Naive thymus-derived CD4-positive, alpha-beta T cell (primary cell): ENCODE measurements at regions of chr11 and their contacts with region 1.

Region 1: GRCh38 chr11:77820563-77821348 is at the starts of genes AAMDC and RSF1:
- DNase-seq: peak; percentile 89 to 98 (median 97)
- ATAC-seq: peak; percentile 92
- H3K4me3 ChIP-seq: peak within 1 kb of the TSS; percentile 97
- H3K4me3 Mint-ChIP-seq: peak within 1 kb of the TSS; percentile 89 to 100 (median 98)
- H3K27ac ChIP-seq: peak within 1 kb of the TSS; percentile 84
- H3K27ac Mint-ChIP-seq: peak within 1 kb of the TSS; percentile 93 to 99 (median 95)
- H3K4me1 ChIP-seq: peaks cover 28 to 30% of the 10 kb centered on the region in 2 donors
- H3K4me1 Mint-ChIP-seq: peaks cover 27 to 48% (median 42%) of the 10 kb centered on the region in 7 donors
- H3K27me3 ChIP-seq: no peaks in the 10 kb centered on the region
- H3K27me3 Mint-ChIP-seq: peaks cover 0 to 2% (median 0%) of the 10 kb centered on the region in 5 donors
- total RNA-seq, gene AAMDC: 5.2 to 9.2 (median 6.5) TPM
- total RNA-seq, gene RSF1: 59.0 to 113 (median 88.9) TPM

Region 2: DNA sequence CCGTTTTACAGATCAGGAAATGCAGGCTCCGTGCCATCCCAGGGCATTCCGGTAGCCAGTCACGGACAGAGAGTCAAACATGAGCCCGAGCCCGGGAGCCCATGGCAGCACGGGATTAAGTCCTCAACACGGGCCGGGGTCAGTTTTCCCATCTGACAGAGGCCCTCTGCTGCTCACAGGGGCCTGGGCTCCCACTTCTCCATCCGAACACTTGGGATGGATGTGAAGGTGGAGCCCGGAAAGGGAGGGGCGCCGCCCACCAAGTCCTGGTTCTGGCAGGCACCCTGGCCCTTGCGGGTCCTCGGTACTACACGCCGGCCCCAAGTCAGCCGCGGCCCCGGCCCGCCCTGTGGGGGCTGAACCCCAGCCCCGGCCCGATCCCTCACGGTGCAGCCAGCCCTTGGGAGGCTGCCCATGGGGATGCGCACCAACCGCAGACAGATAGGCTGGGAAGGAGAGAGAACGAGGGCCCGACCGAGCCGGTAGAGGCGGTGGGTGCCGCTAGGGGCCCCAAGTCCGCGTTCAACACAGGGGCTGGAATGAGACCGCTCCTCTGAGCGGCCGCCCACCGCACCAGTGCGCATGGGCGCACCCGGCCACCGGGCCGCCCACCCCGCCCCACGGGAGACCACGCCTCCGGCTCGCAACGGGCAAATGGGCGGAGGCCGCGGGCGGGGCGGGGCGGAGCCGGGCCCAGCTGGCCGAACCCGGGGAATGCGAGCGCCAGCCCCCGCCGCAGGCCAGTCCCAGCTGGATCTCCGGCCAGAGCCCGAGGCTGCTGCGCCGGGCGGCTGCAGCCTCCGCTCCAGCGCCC is 754.3 kb before region 1 on chr11 and contains the start of gene CAPN5:
- CTCF ChIA-PET with region 1: no interaction called
- POLR2A ChIA-PET with region 1: no interaction called
- intact Hi-C with region 1: loop called (anchors 2 kb)
- DNase-seq: peak; percentile 72 to 93 (median 85)
- ATAC-seq: peak; percentile 98
- H3K4me3 ChIP-seq: peak within 1 kb of the TSS; percentile 73
- H3K4me3 Mint-ChIP-seq: peak within 1 kb of the TSS; percentile 81 to 95 (median 87)
- H3K27ac ChIP-seq: peak within 1 kb of the TSS; percentile 73
- H3K27ac Mint-ChIP-seq: peak within 1 kb of the TSS in 8 of 9 donors; percentile 49 to 95 (median 82)
- H3K4me1 ChIP-seq: peaks cover 0 to 9% of the 10 kb centered on the region in 2 donors
- H3K4me1 Mint-ChIP-seq: peaks cover 5 to 28% (median 21%) of the 10 kb centered on the region in 7 donors
- H3K27me3 ChIP-seq: no peaks in the 10 kb centered on the region
- H3K27me3 Mint-ChIP-seq: peaks cover 0 to 32% (median 0%) of the 10 kb centered on the region in 5 donors
- total RNA-seq, gene CAPN5: 0.94 to 5.8 (median 5.6) TPM

Region 3: GRCh38 chr11:77175869-77176539 is 644.8 kb before region 1 on chr11:
- CTCF ChIA-PET with region 1: no interaction called
- POLR2A ChIA-PET with region 1: no interaction called
- intact Hi-C with region 1: no loop called
- DNase-seq: no peak
- ATAC-seq: peak; percentile 78
- H3K4me3 ChIP-seq: no peak overlapping the region
- H3K4me3 Mint-ChIP-seq: no peak overlapping the region
- H3K27ac ChIP-seq: no peak overlapping the region
- H3K27ac Mint-ChIP-seq: no peak overlapping the region
- H3K4me1 ChIP-seq: no peaks in the 10 kb centered on the region
- H3K4me1 Mint-ChIP-seq: peaks cover 0 to 9% (median 0%) of the 10 kb centered on the region in 7 donors
- H3K27me3 ChIP-seq: no peaks in the 10 kb centered on the region
- H3K27me3 Mint-ChIP-seq: peaks cover 0 to 1% (median 0%) of the 10 kb centered on the region in 5 donors

Region 4: GRCh38 chr11:77687085-77687484 is 133.7 kb before region 1 on chr11:
- CTCF ChIA-PET with region 1: no interaction called
- POLR2A ChIA-PET with region 1: no interaction called
- intact Hi-C with region 1: loop called in 1 of 2 experiments (anchors 5 kb)
- DNase-seq: no peak
- ATAC-seq: no peak
- H3K4me3 ChIP-seq: no peak overlapping the region
- H3K4me3 Mint-ChIP-seq: no peak overlapping the region
- H3K27ac ChIP-seq: no peak overlapping the region
- H3K27ac Mint-ChIP-seq: peak overlapping the region in 2 of 9 donors; percentile 47 to 57
- H3K4me1 ChIP-seq: no peaks in the 10 kb centered on the region
- H3K4me1 Mint-ChIP-seq: peaks cover 0 to 3% (median 0%) of the 10 kb centered on the region in 7 donors
- H3K27me3 ChIP-seq: no peaks in the 10 kb centered on the region
- H3K27me3 Mint-ChIP-seq: no peaks in the 10 kb centered on the region

Region 5: GRCh38 chr11:78045851-78046485 is 225.2 kb after region 1 on chr11:
- CTCF ChIA-PET with region 1: no interaction called
- POLR2A ChIA-PET with region 1: no interaction called
- intact Hi-C with region 1: loop called in 1 of 2 experiments (anchors 1 kb)
- DNase-seq: peak; percentile 66 to 92 (median 83)
- ATAC-seq: peak; percentile 97
- H3K4me3 ChIP-seq: peak overlapping the region; percentile 57
- H3K4me3 Mint-ChIP-seq: peak overlapping the region; percentile 49 to 78 (median 73)
- H3K27ac ChIP-seq: no peak overlapping the region
- H3K27ac Mint-ChIP-seq: peak overlapping the region in 4 of 9 donors; percentile 4 to 67 (median 43)
- H3K4me1 ChIP-seq: peaks cover 0 to 10% of the 10 kb centered on the region in 2 donors
- H3K4me1 Mint-ChIP-seq: peaks cover 4 to 17% (median 9%) of the 10 kb centered on the region in 7 donors
- H3K27me3 ChIP-seq: no peaks in the 10 kb centered on the region
- H3K27me3 Mint-ChIP-seq: no peaks in the 10 kb centered on the region

Region 6: GRCh38 chr11:78188286-78189173 is 367.8 kb after region 1 on chr11 and contains the starts of genes KCTD21 and USP35:
- CTCF ChIA-PET with region 1: no interaction called
- POLR2A ChIA-PET with region 1: no interaction called
- intact Hi-C with region 1: loop called (anchors 1 kb)
- DNase-seq: peak; percentile 83 to 94 (median 87)
- ATAC-seq: peak; percentile 94
- H3K4me3 ChIP-seq: peak within 1 kb of the TSS; percentile 96
- H3K4me3 Mint-ChIP-seq: peak within 1 kb of the TSS; percentile 90 to 100 (median 98)
- H3K27ac ChIP-seq: peak within 1 kb of the TSS; percentile 85
- H3K27ac Mint-ChIP-seq: peak within 1 kb of the TSS; percentile 87 to 99 (median 97)
- H3K4me1 ChIP-seq: peaks cover 15 to 49% of the 10 kb centered on the region in 2 donors
- H3K4me1 Mint-ChIP-seq: peaks cover 37 to 59% (median 56%) of the 10 kb centered on the region in 7 donors
- H3K27me3 ChIP-seq: no peaks in the 10 kb centered on the region
- H3K27me3 Mint-ChIP-seq: no peaks in the 10 kb centered on the region
- total RNA-seq, gene KCTD21: 3.5 to 12.2 (median 6.5) TPM
- total RNA-seq, gene USP35: 11.3 to 19.2 (median 15.2) TPM

Region 7: DNA sequence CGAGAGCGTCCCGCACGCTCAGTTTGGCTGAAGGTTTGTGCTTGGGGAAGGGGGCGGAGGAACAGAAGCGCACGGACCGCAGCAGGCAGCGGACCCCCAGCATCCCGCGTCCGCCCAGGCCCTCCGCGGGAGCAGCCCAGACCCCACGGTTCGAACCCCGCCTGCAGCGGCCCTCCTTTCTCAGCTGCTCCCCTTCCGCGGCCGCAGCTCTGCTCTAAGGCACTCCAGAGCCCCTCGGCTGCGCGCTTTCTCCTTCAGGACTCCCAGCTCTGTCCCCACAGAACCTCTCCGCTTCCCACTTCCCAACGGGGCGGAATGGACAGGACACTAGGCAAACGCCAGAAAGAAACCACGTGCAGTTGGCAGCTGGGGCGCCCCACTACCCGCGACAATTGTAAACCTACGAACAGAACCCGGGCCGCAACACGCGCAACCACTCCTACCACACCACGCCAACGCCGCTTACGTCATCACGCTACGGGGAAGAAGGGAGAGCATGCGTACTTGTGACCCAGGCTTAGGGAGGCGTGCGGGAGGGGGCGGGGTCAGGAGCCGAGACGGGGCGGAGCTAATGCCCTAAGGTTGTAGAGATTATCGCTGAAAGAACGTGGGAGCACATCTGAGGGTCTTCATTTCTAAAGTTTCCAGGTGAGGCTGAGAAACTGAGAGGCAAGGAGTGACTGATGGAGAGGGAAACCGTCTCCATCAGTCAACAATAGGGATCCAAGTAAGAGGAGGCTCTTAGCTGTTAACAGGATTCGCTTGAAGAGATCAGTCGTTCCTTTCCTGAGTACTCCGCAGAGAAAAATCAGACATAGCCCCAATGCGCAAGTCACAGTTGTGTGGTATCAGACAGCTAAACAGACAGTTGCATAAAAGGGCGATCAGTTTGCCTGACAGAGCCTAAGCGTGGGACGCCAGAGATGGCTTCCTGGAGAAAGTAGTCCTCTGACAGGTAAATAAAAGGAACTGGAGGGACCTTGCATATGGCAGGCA is 753.9 kb after region 1 on chr11 and contains the start of gene NARS2:
- CTCF ChIA-PET with region 1: no interaction called
- POLR2A ChIA-PET with region 1: no interaction called
- intact Hi-C with region 1: loop called (anchors 1 kb)
- DNase-seq: peak; percentile 89 to 97 (median 96)
- ATAC-seq: peak; percentile 99
- H3K4me3 ChIP-seq: peak within 1 kb of the TSS; percentile 70
- H3K4me3 Mint-ChIP-seq: peak within 1 kb of the TSS; percentile 93 to 100 (median 98)
- H3K27ac ChIP-seq: peak within 1 kb of the TSS; percentile 96
- H3K27ac Mint-ChIP-seq: peak within 1 kb of the TSS; percentile 86 to 99 (median 98)
- H3K4me1 ChIP-seq: peaks cover 7 to 21% of the 10 kb centered on the region in 2 donors
- H3K4me1 Mint-ChIP-seq: peaks cover 24 to 63% (median 50%) of the 10 kb centered on the region in 7 donors
- H3K27me3 ChIP-seq: no peaks in the 10 kb centered on the region
- H3K27me3 Mint-ChIP-seq: peaks cover 0 to 5% (median 0%) of the 10 kb centered on the region in 5 donors
- total RNA-seq, gene NARS2: 9.3 to 21.5 (median 19.7) TPM